GM12878 (cell line): ENCODE measurements at regions of chr16 and their contacts with region 1.

Region 1: GRCh38 chr16:9248162-9248561 is 156.7 kb downstream of the HAPSTR1 start:
- DNase-seq: no peak
- ATAC-seq: no peak
- H3K4me3 ChIP-seq: no peak overlapping the region
- H3K27ac ChIP-seq: no peak overlapping the region
- H3K4me1 ChIP-seq: no peaks in the 10 kb centered on the region
- H3K27me3 ChIP-seq: no peaks in the 10 kb centered on the region; a peak in 1 of 4 replicates
- CTCF ChIP-seq: no peak
- EP300 ChIP-seq: no peak
- POLR2A ChIP-seq: no peak
- RAD21 ChIP-seq: no peak

Region 2: DNA sequence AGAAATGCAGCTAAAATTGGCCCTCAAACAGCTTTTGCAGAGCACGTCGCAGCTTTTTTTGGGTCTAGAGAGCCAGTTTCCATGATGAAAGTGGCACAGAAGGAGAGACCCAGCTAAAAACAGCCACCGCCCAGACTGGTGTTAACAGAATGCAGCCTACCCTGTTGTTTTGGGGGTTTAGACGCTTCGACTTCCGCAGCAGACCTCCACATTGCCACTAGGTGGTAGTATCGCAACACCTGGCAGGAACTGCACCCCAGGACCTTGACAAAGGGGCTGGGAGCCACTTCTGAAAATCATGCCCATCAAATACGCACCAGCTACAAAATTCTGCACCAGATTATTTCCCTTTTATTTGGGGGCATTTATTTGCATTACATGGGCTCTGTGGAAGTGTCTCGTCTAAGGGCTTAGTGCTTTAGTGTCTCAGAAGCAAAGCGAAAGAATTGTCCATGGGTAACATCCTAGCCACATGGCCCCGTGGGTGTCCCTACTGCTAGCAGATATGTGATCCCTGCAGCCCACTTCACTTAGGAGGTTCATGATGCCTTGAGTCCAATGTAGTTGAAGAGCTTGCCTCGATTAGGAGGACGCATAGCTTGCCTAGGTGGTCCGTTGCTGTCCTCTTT is 10.4 kb after region 1 on chr16:
- CTCF ChIA-PET with region 1: interaction called, 10 read pairs
- POLR2A ChIA-PET with region 1: no interaction called
- RAD21 ChIA-PET with region 1: no interaction called
- SMC1A ChIA-PET with region 1: interaction called, 3 read pairs
- in situ Hi-C with region 1: no loop called
- intact Hi-C with region 1: no loop called
- DNase-seq: no peak
- ATAC-seq: peak; percentile 95
- H3K4me3 ChIP-seq: no peak overlapping the region
- H3K27ac ChIP-seq: no peak overlapping the region
- H3K4me1 ChIP-seq: no peaks in the 10 kb centered on the region
- H3K27me3 ChIP-seq: no peaks in the 10 kb centered on the region; a peak in 1 of 4 replicates
- CTCF ChIP-seq: peak; percentile 69 to 76 (median 71)
- EP300 ChIP-seq: no peak
- POLR2A ChIP-seq: no peak
- RAD21 ChIP-seq: peak; percentile 57

Region 3: GRCh38 chr16:9270424-9270823 is 22.3 kb after region 1 on chr16:
- CTCF ChIA-PET with region 1: no interaction called
- POLR2A ChIA-PET with region 1: no interaction called
- RAD21 ChIA-PET with region 1: no interaction called
- SMC1A ChIA-PET with region 1: no interaction called
- in situ Hi-C with region 1: no loop called
- intact Hi-C with region 1: no loop called
- DNase-seq: no peak
- ATAC-seq: no peak
- H3K4me3 ChIP-seq: no peak overlapping the region
- H3K27ac ChIP-seq: no peak overlapping the region
- H3K4me1 ChIP-seq: no peaks in the 10 kb centered on the region
- H3K27me3 ChIP-seq: no peaks in the 10 kb centered on the region; a peak in 1 of 4 replicates
- CTCF ChIP-seq: no peak
- EP300 ChIP-seq: no peak
- POLR2A ChIP-seq: no peak
- RAD21 ChIP-seq: no peak

Region 4: DNA sequence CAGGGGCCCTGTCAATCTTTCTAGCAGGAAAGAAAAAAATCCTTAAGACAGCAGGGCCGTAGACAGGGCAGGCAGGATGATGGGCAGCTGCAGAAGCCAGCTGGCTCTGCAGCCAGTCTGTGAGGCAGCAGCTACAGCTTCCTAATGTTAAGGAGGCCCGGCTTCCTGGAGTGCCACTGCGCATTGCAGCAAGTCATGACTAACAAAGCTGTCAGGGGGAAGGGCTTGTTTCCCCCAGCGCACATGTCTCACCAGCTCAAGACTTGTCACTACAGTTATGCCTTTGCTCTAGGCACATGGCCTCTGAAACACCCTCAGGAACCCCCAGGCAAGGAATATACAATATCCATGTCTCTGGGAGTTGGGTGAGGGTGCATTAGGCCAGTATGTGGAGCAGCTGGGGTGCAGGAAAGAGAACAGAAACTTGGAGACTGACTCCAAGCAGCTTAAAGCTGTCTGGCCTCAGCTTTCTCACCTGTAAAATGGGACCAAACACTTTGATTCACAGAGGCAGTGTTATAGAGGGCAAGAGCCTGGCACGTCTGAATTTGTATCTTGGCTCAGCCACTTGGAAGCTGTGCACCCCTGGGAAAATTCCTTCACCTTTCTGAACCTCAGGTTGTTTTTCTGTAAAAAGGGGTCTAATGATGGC is 63.3 kb after region 1 on chr16:
- CTCF ChIA-PET with region 1: no interaction called
- POLR2A ChIA-PET with region 1: no interaction called
- RAD21 ChIA-PET with region 1: no interaction called
- SMC1A ChIA-PET with region 1: no interaction called
- in situ Hi-C with region 1: no loop called
- intact Hi-C with region 1: no loop called
- DNase-seq: no peak
- ATAC-seq: no peak
- H3K4me3 ChIP-seq: no peak overlapping the region
- H3K27ac ChIP-seq: no peak overlapping the region
- H3K4me1 ChIP-seq: no peaks in the 10 kb centered on the region
- H3K27me3 ChIP-seq: no peaks in the 10 kb centered on the region; a peak in 1 of 4 replicates
- CTCF ChIP-seq: no peak
- EP300 ChIP-seq: no peak
- POLR2A ChIP-seq: no peak
- RAD21 ChIP-seq: no peak